MCF 10A (cell line): ENCODE measurements at regions of chrX and their contacts with region 1.

Region 1: DNA sequence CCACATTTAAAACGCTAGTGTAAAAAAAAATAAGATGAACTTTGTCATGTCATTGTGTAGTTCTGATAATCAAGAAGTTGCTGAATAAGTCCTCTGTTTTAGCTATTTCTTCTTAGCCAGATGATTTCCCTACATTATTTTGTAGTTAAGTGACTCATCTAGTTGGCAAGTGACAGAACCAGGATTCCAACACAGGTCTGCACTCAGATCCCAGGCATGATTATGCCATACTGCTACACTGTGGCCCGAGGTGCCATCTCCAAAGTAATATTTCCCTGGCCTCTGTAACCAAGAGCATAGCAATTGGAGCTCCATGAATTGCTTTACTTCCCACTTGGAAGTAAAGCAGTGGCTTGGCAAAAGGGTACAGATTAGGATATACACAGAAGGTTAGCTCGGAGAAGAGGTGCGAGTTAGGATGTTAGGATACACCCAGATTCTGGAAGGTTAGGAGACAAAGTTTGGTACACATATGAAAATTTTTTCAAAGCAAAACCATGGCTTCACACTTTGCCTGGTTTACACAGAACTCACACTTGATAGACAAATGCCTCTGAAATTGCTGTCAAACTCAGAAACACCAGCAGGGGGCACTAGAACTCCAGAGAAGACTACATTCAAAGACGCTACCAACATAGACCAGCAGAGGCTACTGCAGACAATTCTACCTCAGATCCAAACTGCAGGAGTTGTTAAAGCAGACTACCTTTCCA is 41.4 kb downstream of the SRPX2 start:
- DNase-seq: peak; percentile 80
- H3K4me3 Mint-ChIP-seq: no peak overlapping the region
- H3K27ac Mint-ChIP-seq: no peak overlapping the region
- H3K4me1 Mint-ChIP-seq: no peaks in the 10 kb centered on the region
- H3K27me3 Mint-ChIP-seq: peaks cover 32% of the 10 kb centered on the region
- CTCF ChIP-seq: peak; percentile 88

Region 2: DNA sequence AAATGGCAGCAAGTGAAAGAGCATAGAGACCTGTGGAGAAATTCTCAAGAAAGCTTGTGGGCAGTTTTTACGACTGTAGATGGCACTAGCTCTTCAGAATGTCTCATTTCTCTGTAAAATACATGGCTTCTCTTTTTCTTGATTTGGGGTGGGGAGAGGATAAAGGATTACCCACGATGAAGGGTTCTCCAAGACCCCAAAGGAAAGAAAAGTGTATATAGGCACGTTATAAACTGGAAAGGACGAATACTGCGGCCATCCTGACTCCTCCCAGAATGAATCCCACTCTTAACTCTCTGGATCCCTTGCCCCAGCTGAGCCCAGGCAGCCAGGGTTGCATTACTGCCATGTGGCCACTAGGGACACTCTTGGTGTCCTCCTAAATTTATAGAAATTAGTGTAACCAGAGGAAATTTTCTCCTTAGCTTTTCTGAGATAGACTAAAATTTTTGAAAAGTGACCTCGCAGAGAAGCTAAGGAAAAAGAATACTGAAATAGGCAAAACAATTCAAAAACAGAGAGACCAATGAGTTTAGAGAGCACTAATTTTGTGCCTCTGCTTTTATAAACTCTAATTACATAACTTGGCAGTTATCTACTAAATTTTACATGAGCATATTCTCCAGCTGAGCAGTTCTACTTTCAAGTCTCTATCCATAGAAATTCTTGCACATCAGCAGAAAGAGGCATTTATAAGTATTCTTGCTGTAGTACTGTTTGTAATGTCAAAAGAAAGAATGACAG is 237.6 kb before region 1 on chrX:
- CTCF ChIA-PET with region 1: no interaction called
- POLR2A ChIA-PET with region 1: no interaction called
- intact Hi-C with region 1: no loop called
- DNase-seq: peak; percentile 54
- H3K4me3 Mint-ChIP-seq: peak overlapping the region; percentile 17
- H3K27ac Mint-ChIP-seq: no peak overlapping the region
- H3K4me1 Mint-ChIP-seq: peaks cover 6% of the 10 kb centered on the region
- H3K27me3 Mint-ChIP-seq: peaks cover 35% of the 10 kb centered on the region
- CTCF ChIP-seq: peak; percentile 58

Region 3: GRCh38 chrX:100731441-100732281 is 46.2 kb after region 1 on chrX and contains the start of gene SYTL4:
- CTCF ChIA-PET with region 1: interaction called, 17 read pairs
- POLR2A ChIA-PET with region 1: no interaction called
- intact Hi-C with region 1: no loop called
- DNase-seq: peak; percentile 15
- H3K4me3 Mint-ChIP-seq: peak within 1 kb of the TSS; percentile 84
- H3K27ac Mint-ChIP-seq: no peak within 1 kb of the TSS
- H3K4me1 Mint-ChIP-seq: no peaks in the 10 kb centered on the region
- H3K27me3 Mint-ChIP-seq: peaks cover 68% of the 10 kb centered on the region
- CTCF ChIP-seq: no peak
- total RNA-seq, gene SYTL4: 1.9 and 2.1 TPM in 2 replicates

Region 4: DNA sequence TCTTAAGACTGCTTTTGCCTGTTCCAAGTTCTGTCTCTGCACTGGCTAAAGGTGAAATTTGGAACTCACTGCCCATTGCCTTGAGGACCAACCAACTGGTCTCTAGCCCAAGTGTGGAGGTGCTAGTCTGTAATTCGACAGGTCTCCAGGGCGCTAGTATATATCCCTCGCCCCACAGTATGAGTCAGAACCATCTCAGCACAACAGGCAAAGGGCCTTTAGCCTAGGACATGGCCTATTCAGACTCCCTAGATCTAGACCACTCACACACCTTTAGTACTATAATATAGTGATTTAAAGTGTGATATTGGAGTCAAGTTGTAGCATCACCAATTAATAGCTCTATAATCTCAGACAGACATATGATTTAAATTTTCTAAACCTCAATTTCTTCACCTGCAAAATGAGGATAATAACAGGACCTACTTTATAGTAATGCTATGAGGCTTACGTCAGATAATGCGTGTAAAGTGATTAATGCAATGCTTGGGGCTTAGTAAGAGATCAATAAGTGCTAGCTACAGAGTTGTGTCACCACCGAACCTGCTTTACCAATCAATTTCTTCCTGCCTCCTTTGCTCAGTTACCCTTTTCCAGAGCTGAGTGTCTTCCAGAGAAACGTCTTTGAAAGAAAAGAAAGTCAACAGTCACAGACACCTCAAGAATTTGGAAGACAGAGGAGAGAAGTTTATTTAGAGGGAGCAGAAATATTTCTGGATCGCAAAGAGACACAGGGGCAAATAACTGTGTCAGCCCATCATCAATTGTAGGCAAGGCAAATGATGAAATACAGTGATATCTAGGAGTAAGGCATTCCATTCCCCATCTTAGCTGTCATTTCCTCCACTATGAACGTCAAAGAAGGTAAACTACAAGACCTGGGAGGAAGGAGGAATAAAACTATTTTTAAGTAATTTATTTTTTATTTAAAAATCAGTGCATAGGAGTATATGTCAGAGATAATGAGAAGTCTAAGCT is 186.4 kb after region 1 on chrX:
- CTCF ChIA-PET with region 1: no interaction called
- POLR2A ChIA-PET with region 1: no interaction called
- intact Hi-C with region 1: no loop called
- DNase-seq: no peak
- H3K4me3 Mint-ChIP-seq: no peak overlapping the region
- H3K27ac Mint-ChIP-seq: no peak overlapping the region
- H3K4me1 Mint-ChIP-seq: no peaks in the 10 kb centered on the region
- H3K27me3 Mint-ChIP-seq: peaks cover 44% of the 10 kb centered on the region
- CTCF ChIP-seq: no peak

Region 5: GRCh38 chrX:101206471-101206870 is 521.0 kb after region 1 on chrX:
- CTCF ChIA-PET with region 1: interaction called, 3 read pairs
- POLR2A ChIA-PET with region 1: no interaction called
- intact Hi-C with region 1: loop called (anchors 10 kb)
- DNase-seq: peak; percentile 49
- H3K4me3 Mint-ChIP-seq: no peak overlapping the region
- H3K27ac Mint-ChIP-seq: no peak overlapping the region
- H3K4me1 Mint-ChIP-seq: no peaks in the 10 kb centered on the region
- H3K27me3 Mint-ChIP-seq: peaks cover 24% of the 10 kb centered on the region
- CTCF ChIP-seq: peak; percentile 38